GM13977 (cell line): ENCODE measurements at regions of chr16 and their contacts with region 1.

Region 1: DNA sequence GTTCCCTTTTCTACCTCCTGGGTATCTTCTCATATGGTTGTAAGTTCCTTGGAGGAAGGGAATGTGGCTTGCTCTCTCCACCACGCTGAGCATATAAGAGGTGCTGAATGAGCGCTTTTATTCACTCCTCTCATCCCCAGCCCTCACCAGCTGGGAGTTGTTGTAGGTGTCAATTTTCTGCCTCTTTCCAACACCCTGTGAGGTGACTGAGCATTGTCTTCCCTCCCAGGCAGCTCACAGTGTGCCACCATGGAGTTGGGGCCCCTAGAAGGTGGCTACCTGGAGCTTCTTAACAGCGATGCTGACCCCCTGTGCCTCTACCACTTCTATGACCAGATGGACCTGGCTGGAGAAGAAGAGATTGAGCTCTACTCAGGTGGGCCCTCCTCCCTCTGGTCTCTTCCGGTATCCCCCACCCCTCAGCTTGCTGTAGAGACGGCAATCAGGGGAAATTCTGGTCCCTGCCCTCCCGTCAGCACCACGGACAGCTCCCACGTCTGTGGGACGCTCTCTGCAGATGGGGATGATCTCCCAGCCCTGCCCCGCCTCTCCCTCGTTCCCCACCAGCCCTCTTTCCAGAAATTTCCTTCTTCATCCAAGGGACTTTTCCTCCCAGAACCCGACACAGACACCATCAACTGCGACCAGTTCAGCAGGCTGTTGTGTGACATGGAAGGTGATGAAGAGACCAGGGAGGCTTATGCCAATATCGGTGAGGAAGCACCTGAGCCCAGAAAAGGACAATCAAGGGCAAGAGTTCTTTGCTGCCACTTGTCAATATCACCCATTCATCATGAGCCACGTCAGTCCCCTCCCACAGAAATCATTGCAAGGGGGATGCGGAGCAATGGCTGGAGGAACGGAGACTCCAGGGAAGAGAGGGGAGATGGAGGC is 18.3 kb downstream of the CIITA start:
- DNase-seq: no peak
- CTCF ChIP-seq: no peak

Region 2: GRCh38 chr16:10743610-10744393 is 151.5 kb before region 1 on chr16 and contains the start of gene NUBP1:
- in situ Hi-C with region 1: loop called (anchors 10 kb)
- DNase-seq: peak; percentile 94
- CTCF ChIP-seq: no peak